Activated CD8-positive, alpha-beta T cell treated with anti-CD3 and anti-CD28 coated beads, Interleukin-2, amount 10 ng/mL, durations not matched to agents 7 days and 5 days (primary cell): ENCODE measurements at regions of chr11 and their contacts with region 1.

Region 1: DNA sequence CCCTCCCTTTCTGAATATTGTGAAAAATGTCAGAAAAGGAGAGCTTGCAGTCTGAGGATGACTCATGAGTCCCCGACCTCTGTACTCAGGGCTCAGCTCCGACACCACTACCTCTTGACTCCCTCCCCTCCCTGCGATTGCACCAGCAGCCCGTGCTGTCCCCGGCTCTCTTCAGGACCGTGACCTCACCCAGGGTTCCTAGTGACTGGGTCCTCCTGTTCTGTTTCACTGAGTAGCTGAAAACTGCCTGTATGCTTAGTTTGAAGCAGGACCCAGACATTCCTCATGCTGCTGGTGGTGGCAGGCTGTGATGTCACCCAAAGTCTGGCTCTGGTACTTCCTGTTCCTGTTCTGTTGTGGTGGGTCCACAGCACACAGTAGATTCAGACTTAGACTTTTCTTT is 11.7 kb downstream of the PHRF1 start:
- DNase-seq: peak; percentile 86
- ATAC-seq: peak; percentile 96
- H3K4me3 Mint-ChIP-seq: peak overlapping the region; percentile 77
- H3K27ac Mint-ChIP-seq: peak overlapping the region; percentile 100
- H3K4me1 Mint-ChIP-seq: peaks cover 34% of the 10 kb centered on the region
- H3K27me3 Mint-ChIP-seq: no peaks in the 10 kb centered on the region

Region 2: GRCh38 chr11:575996-576768 is 11.8 kb before region 1 on chr11 and contains the start of gene PHRF1:
- CTCF ChIA-PET with region 1: interaction called, 5 read pairs
- POLR2A ChIA-PET with region 1: interaction called, 30 read pairs
- DNase-seq: peak; percentile 96
- ATAC-seq: peak; percentile 86
- H3K4me3 Mint-ChIP-seq: peak within 1 kb of the TSS; percentile 89
- H3K27ac Mint-ChIP-seq: peak within 1 kb of the TSS; percentile 98
- H3K4me1 Mint-ChIP-seq: peaks cover 51% of the 10 kb centered on the region
- H3K27me3 Mint-ChIP-seq: peaks cover 15% of the 10 kb centered on the region
- total RNA-seq, gene PHRF1: 53.7 to 58.1 TPM

Region 3: DNA sequence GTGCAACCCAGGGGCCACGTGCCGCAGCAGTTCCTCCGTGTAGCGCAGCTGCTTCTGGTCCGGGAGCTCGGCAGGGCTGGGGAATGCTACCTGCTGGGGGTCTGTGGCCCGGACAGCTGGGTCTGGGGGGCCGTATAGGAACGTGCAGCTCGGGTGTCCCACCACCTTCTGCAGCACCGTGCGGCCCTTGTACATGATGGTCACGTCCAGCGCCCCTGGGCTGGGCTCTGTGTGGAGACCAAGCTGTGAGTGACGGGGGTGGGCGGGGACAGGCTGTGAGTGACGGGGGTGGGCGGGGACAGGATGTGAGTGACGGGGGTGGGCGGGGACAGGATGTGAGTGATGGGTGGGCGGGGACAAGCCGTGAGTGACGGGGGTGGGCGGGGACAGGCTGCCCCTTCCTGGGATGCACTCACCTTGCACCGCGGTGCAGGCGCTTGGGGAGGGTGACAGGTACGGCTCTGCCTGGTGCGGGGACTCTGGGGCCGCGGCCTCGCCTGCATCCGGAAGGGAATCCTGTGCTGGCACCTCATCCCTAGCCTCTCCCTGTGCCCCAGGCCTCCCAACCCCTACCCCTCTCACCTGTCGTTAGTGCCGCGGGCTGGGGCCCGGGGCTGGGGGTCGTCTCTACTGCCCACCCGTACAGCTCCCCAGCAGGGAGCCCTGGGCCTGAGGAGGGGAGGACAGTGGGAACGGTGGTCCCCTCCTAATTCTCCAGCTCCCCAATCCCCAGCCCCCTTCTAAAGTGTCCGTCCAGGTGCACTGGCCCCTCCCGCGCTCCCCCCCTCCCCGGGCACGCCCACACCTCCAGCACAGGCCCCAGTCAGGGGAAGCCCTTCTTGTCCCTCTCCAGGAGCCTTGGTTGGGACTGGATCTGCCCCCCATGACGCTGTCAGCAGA is 25.6 kb after region 1 on chr11:
- CTCF ChIA-PET with region 1: no interaction called
- POLR2A ChIA-PET with region 1: interaction called, 27 read pairs
- DNase-seq: peak; percentile 89
- ATAC-seq: peak; percentile 18
- H3K4me3 Mint-ChIP-seq: peak overlapping the region; percentile 95
- H3K27ac Mint-ChIP-seq: peak overlapping the region; percentile 90
- H3K4me1 Mint-ChIP-seq: peaks cover 30% of the 10 kb centered on the region
- H3K27me3 Mint-ChIP-seq: no peaks in the 10 kb centered on the region